ENCODE measurements at regions of chr2 and their contacts with region 1.

Region 1: GRCh38 chr2:113203901-113204519 is 30.2 kb downstream of the PSD4 start:
- DNase-seq: peak; percentile 84 to 92
- H3K4me3 ChIP-seq: no peak overlapping the region
- H3K27ac ChIP-seq: peak overlapping the region; percentile 9 to 77 (median 41)
- H3K4me1 ChIP-seq: peaks cover 13 to 54% (median 39%) of the 10 kb centered on the region in 4 donors
- H3K27me3 ChIP-seq: no peaks in the 10 kb centered on the region
- CTCF ChIP-seq: peak in 5 of 7 experiments; percentile 83 to 94 (median 90)
- EP300 ChIP-seq: no peak
- POLR2A ChIP-seq: no peak

Region 2: DNA sequence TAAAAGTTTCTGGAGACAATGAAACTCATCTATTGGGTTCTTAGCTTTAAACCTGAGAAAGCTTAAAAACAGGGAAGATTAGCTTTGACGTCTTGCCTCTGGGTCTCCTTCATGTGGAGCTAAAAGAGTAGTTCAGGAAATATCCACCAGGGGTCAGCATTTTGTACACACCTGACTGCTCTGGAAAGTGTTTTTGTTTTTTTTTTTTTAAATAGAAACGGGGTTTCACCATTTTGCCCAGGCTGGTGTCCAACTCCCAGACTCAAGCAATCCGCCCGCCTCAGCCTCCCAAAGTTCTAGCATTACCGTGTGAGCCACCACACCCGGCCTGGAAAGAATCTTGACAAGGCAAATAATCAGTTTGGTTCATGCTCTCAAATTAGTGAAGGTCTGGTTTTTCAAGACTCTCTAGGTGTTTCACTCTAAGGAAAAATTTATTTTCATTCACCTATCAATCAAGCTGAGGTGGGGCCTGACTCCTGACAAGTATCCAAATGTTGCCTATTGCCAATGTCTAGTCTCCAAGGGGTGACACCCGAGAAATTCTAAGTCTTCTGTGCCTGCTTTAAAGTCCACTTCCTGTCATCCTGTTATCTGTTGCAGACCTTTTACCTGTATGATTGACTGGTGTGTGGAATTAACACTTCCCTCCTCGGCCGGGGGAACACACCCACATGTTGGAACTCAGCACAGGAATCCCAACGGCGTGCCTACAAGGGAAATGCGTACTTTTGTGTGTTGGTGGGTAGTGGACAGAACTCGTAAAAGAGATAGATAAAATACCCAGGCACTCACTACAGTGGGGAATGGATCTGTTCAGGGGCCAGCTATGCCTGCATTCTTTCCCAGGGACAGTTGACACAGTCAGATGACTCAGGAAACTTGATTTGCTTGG is 65.3 kb before region 1 on chr2:
- intact Hi-C with region 1: loop called (anchors 5 kb)
- DNase-seq: peak; percentile 50 to 92
- H3K4me3 ChIP-seq: no peak overlapping the region
- H3K27ac ChIP-seq: peak overlapping the region in 3 of 5 donors; percentile 36 to 68 (median 40)
- H3K4me1 ChIP-seq: peaks cover 0 to 11% (median 7%) of the 10 kb centered on the region in 4 donors
- H3K27me3 ChIP-seq: no peaks in the 10 kb centered on the region
- CTCF ChIP-seq: peak in 6 of 7 experiments; percentile 27 to 90 (median 81)
- EP300 ChIP-seq: no peak
- POLR2A ChIP-seq: no peak